ENCODE measurements at regions of chr5 and their contacts with region 1.

Region 1: GRCh38 chr5:128213340-128213739 is 129.8 kb downstream of the SLC12A2 start:
- DNase-seq: peak in 1 of 2 donors; percentile 31
- H3K4me3 ChIP-seq: no peak overlapping the region
- CTCF ChIP-seq: peak in 1 of 3 donors; percentile 41
- POLR2A ChIP-seq: no peak

Region 2: DNA sequence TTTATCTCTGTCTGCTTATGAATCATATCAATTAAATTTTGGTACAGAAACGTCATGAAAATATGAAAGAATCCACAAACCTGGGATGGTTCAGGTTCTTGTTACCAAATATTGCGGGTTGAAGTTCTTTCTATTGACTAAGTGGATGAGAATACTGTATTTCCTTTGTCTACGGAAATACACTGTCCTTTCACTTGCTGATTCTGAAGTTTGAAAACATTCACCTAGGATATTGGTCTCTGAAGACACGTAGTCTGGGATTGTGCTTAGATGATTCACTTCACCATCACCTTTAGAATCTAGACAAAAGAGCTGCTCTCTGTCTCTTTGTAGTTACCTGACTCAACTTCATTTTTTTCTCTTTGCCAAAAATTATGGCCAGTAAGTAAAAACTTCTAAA is 102.3 kb after region 1 on chr5:
- intact Hi-C with region 1: no loop called
- DNase-seq: no peak
- H3K4me3 ChIP-seq: no peak overlapping the region
- CTCF ChIP-seq: no peak
- POLR2A ChIP-seq: no peak

Region 3: DNA sequence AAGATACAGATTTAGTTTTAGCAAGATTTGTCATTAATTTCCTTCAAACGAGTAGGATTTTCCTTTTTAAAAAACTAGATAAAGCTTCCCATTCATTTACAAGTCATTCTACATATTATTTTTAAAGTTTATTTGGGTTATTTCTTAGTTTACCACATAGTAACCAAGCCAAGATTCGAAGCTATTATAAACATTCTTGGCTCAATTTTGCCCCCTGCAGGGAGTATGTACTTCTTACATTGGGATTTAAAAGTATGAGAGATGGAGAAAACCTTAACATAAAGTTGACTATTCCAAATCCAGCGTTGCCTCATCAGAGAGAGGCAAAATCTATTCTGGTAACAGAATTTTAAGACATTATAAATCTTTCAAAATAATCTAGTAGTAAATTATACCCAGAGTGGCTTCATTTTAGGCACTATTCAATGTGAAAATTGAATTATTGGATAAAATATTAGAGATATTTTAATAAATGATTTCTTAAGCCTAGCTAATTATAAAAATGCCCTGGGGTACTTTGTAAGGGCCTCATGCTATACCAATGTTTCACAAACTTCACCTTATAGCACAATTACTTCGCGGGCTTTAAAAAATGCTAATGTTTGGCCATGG is 285.6 kb after region 1 on chr5:
- intact Hi-C with region 1: loop called (anchors 10 kb)
- DNase-seq: no peak
- H3K4me3 ChIP-seq: no peak overlapping the region
- CTCF ChIP-seq: no peak
- POLR2A ChIP-seq: no peak

Region 4: DNA sequence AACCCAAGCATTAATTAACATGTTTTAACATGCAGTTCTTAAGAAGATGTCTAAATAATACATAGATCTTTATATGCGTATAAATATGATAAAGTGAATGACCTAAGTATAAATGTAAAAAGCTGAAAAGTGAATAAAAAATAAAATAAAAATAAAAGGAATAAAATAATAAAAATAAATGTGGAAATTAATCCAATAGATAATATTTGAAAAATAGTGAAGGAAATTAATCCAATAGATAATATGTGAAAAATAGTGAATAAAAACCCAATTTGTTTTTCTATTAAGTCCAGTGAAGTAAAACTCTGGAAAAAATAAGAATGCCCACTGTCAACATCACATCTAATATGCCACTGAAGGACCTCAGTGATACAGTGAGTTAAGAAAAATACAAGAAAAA is 571.4 kb after region 1 on chr5:
- intact Hi-C with region 1: loop called (anchors 5 kb)
- DNase-seq: no peak
- H3K4me3 ChIP-seq: no peak overlapping the region
- CTCF ChIP-seq: no peak
- POLR2A ChIP-seq: no peak

Measured in lower leg skin (tissue), 4 donors.